Activated T-helper 1 cell treated with anti-CD3 and anti-CD28 coated beads, Interleukin-12 subunit alpha, Interleukin-12 subunit beta, Interleukin-2, Interleukin-4 antibody, amounts not matched to agents 30 ng/mL and 10 ng/mL and 1 ng/mL, durations not matched to agents 14 hours and 24 hours and 36 hours (primary cell): ENCODE measurements at regions of chr1 and their contacts with region 1.

Region 1: DNA sequence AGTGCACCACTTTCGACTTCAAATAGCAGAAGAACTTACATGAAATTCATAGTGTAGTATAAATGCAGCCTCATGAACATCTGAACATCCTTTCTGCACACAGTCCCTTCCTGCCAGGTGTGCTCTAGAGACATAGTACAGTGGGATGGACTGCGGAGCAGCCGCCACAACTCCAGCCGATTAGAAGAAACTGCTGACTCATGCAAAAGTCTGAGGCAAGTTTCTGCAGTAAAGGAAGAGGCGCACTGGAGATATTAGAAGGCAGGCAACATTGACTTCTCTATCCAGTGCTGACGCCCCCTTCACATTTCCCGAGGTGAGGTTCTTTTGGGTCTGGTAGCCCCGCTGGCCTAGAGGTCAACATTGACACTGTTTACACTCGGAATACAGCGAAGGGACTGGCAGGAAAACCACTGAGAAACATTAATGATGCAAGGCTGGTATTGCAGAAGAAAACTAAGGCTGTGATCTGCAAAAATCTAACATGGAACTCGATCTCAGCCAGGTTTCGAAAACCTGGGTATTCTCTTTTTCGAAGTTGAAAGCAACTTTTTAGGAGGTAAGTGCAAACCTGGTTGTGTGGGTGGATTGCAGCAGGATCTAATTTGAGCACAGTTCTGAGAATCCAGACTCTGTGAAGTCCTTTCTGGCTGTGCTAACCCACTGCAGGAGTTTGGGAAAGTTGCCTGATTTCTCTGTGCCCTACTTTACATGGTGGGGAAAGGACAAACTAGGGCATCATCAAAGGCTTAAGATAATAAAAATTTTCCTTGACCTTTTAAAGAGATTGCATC is 90.7 kb downstream of the CDC7 start:
- DNase-seq: no peak
- H3K4me3 Mint-ChIP-seq: peak overlapping the region; percentile 73
- H3K27ac Mint-ChIP-seq: peak overlapping the region; percentile 79
- H3K4me1 Mint-ChIP-seq: peaks cover 40% of the 10 kb centered on the region
- H3K27me3 Mint-ChIP-seq: peaks cover 4% of the 10 kb centered on the region

Region 2: DNA sequence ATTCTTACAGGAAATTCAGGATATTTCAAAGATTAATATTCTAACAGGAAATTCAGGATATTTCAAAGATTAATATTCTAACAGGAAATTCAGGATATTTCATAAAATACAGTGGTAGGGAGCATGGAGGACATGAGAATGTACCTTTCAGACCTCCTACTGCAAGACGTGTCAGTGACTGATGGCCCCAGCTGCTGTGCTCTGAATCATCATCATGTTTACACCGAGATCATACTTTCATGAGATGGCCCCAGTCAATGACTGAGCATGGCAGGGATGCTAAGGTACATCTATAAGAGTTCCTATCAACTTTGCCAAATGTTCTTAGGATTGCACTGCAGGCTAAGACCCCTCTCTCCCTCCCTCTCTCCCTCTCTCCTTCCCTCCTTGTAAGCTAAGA is 255.8 kb before region 1 on chr1:
- intact Hi-C with region 1: no loop called
- DNase-seq: no peak
- H3K4me3 Mint-ChIP-seq: no peak overlapping the region
- H3K27ac Mint-ChIP-seq: no peak overlapping the region
- H3K4me1 Mint-ChIP-seq: no peaks in the 10 kb centered on the region
- H3K27me3 Mint-ChIP-seq: peaks cover under 1% of the 10 kb centered on the region

Region 3: DNA sequence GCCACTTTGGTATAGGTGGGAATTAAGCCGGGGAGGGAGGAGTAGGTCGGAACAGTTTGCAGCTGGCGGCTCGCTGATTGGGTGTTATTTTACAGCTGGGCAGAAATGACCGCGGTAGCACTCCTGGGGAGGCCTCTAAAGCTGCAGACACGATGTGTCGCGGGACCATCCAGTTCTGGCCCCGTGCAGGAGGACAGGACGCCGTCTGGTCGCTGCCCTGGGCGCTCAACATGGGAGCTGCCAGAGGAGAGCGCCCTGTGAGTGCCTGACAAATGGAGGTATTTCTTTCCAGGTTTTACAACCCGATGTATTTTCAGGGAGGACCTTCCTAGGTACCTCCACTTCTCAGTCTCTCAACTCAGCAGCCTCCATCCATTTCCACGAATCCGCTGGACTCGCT is 44.5 kb before region 1 on chr1:
- intact Hi-C with region 1: no loop called
- DNase-seq: no peak
- H3K4me3 Mint-ChIP-seq: no peak overlapping the region
- H3K27ac Mint-ChIP-seq: no peak overlapping the region
- H3K4me1 Mint-ChIP-seq: peaks cover 63% of the 10 kb centered on the region
- H3K27me3 Mint-ChIP-seq: no peaks in the 10 kb centered on the region

Region 4: GRCh38 chr1:91732291-91733107 is 141.1 kb after region 1 on chr1:
- intact Hi-C with region 1: no loop called
- DNase-seq: no peak
- H3K4me3 Mint-ChIP-seq: no peak overlapping the region
- H3K27ac Mint-ChIP-seq: peak overlapping the region; percentile 37
- H3K4me1 Mint-ChIP-seq: peaks cover 51% of the 10 kb centered on the region
- H3K27me3 Mint-ChIP-seq: peaks cover 8% of the 10 kb centered on the region

Region 5: DNA sequence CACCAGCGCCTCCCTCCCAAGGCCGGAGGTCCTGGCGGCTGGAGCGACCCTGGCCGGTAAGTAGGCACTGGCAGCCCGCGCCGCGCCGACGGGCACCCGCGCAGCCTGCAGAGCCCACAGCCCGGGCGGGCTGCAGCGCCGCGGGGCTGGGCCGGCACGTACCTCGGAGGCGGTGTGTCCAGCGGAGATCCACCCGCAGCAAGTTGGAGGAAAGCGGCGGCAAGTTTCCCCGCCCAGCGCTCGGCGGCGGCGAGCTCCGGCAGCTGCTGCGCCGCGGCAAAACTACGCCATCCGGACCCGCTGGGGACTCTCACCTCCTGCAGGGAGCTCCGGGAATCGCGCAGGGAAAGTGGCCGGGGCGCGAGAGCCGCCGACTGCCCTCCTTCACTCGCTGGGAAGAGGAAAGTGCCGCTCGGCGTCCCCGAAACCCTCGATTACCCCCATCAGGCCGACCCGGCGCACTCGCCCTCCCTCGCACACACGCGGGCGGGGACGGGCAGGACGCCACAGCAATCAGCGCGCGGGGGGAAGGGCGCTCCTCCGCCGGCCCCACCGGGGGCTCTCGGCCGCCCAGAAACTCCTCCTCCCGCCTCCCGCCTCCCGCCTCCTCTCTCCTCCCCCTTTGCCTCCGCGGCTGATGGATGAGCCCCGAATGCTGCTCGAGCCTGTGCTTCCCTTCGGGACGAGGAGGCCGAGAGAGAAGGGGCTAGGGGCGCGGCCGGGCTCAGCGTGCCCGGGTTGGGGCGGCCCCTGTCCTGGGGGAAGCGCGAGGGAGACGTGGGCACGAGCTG is 294.5 kb after region 1 on chr1 and contains the start of gene TGFBR3:
- intact Hi-C with region 1: loop called (anchors 5 kb)
- DNase-seq: peak; percentile 56
- H3K4me3 Mint-ChIP-seq: peak within 1 kb of the TSS; percentile 98
- H3K27ac Mint-ChIP-seq: peak within 1 kb of the TSS; percentile 84
- H3K4me1 Mint-ChIP-seq: peaks cover 28% of the 10 kb centered on the region
- H3K27me3 Mint-ChIP-seq: peaks cover 19% of the 10 kb centered on the region
- total RNA-seq, gene TGFBR3: 8.9 and 11.8 TPM in 2 replicates